Heart left ventricle (tissue), 16 donors: ENCODE measurements at regions of chr5 and their contacts with region 1.

Region 1: DNA sequence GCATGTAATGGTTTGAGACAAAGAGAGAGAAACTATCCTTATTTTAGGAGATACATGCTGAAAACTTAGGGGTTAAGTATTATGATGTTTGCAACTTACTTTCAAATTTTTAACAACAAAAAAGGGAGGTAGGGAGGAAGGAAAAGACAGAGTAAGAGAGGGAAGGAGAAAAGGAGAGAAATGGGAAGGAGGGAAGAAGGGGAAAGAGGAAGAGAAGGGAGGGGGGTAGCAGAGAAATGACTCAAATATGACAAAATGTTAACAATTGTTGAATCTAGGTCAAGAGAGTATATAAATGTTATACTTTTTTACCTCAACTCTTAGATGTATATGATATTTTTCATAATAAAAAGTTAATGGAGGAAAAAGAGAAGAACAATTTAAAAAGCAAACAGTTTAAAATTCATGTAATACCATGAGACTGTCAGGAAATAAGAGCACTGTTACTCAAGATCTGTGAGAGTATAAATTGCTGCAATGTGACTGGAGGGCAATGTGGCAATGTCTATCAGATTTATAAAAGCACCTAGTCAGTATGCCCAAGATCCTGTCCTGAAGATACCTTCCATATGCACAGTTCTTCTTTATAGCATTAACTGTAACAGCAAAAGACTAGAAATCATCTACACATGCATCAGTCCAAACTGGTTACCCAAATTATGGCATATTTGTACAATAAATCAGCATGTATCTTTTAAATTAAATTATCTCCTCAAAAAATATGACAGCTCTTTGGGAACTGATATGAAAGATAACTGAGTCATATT is 16.3 kb downstream of the FBXW11 start:
- DNase-seq: no peak
- ATAC-seq: no peak
- H3K4me3 ChIP-seq: no peak overlapping the region
- H3K27ac ChIP-seq: no peak overlapping the region
- H3K4me1 ChIP-seq: peaks cover 0 to 27% (median 7%) of the 10 kb centered on the region in 12 donors
- H3K27me3 ChIP-seq: no peaks in the 10 kb centered on the region
- CTCF ChIP-seq: no peak
- POLR2A ChIP-seq: no peak

Region 2: GRCh38 chr5:171927345-171927941 is 62.7 kb before region 1 on chr5:
- intact Hi-C with region 1: loop called in 1 of 10 experiments (anchors 5 kb)
- DNase-seq: no peak
- ATAC-seq: no peak
- H3K4me3 ChIP-seq: no peak overlapping the region
- H3K27ac ChIP-seq: no peak overlapping the region
- H3K4me1 ChIP-seq: peaks cover 0 to 21% (median 2%) of the 10 kb centered on the region in 12 donors
- H3K27me3 ChIP-seq: no peaks in the 10 kb centered on the region
- CTCF ChIP-seq: peak in 3 of 12 donors; percentile 8 to 18 (median 17)
- POLR2A ChIP-seq: no peak